ENCODE measurements at regions of chr10 and their contacts with region 1.

Region 1: GRCh38 chr10:114550756-114551635 is 107.1 kb downstream of the ABLIM1 start:
- DNase-seq: peak in 3 of 5 donors; percentile 33 to 39 (median 37)
- H3K4me3 ChIP-seq: no peak overlapping the region
- H3K4me3 Mint-ChIP-seq: no peak overlapping the region
- H3K27ac ChIP-seq: no peak overlapping the region
- H3K27ac Mint-ChIP-seq: peak overlapping the region in 4 of 7 donors; percentile 4 to 83 (median 40)
- H3K4me1 ChIP-seq: peaks cover 33% of the 10 kb centered on the region
- H3K4me1 Mint-ChIP-seq: peaks cover 13 to 28% (median 20%) of the 10 kb centered on the region in 4 donors
- H3K27me3 ChIP-seq: no peaks in the 10 kb centered on the region
- H3K27me3 Mint-ChIP-seq: no peaks in the 10 kb centered on the region

Region 2: DNA sequence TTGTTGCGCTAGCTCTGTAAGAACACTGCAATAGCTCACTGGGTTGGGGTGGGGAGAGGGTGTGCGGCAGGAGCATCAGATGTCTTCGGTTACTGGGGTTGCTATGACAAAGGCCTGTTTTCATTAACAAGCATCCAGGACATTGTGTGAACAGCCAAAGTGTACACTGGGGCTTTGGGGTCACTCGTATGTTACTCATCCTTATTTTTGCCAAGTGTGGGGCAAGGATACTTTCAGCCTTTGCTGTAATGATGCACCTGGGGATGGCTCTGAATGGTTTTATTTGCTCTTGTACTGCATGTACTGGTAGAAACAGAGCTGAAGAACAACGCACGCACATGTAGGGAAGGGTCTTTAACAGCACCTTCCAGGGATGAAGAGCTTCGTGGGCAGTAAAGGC is 73.7 kb before region 1 on chr10:
- CTCF ChIA-PET with region 1: interaction called, 241 read pairs
- POLR2A ChIA-PET with region 1: no interaction called
- intact Hi-C with region 1: no loop called
- DNase-seq: no peak
- H3K4me3 ChIP-seq: no peak overlapping the region
- H3K4me3 Mint-ChIP-seq: no peak overlapping the region
- H3K27ac ChIP-seq: no peak overlapping the region
- H3K27ac Mint-ChIP-seq: peak overlapping the region in 6 of 7 donors; percentile 16 to 83 (median 74)
- H3K4me1 ChIP-seq: no peaks in the 10 kb centered on the region
- H3K4me1 Mint-ChIP-seq: peaks cover 35 to 68% (median 44%) of the 10 kb centered on the region in 4 donors
- H3K27me3 ChIP-seq: no peaks in the 10 kb centered on the region
- H3K27me3 Mint-ChIP-seq: no peaks in the 10 kb centered on the region

Region 3: DNA sequence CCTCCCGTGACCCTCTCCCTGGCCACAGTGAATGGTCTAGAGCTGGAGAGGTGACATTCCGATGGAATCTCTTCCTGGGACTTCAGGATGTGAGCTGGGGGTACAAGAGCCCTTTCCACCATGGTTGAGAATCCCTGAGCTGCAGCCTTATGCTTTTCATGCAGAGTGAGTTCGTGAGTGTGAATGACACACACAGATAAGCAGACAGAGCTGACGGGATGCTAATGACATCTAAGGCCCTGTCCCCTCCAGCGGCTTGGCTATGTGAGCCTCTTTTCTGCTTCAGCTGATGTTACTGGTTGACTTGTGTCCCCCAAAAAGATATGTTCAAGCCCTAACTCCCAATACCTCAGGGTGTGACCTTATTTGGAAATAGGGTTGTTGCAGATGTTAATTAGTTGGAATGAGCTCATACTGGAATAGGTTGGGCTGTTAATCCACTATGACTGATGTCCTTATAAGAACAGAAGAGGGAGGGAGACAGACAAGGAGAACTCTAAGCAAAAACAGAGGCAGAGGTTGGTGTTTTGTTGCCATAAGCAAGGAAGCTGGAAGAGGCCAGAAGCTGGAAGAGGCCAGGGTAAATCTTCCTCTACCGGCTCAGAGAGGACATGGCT is 35.6 kb before region 1 on chr10:
- CTCF ChIA-PET with region 1: interaction called, 12 read pairs
- POLR2A ChIA-PET with region 1: interaction called, 459 read pairs
- intact Hi-C with region 1: no loop called
- DNase-seq: no peak
- H3K4me3 ChIP-seq: no peak overlapping the region
- H3K4me3 Mint-ChIP-seq: peak overlapping the region in 4 of 8 donors; percentile 4 to 35 (median 15)
- H3K27ac ChIP-seq: no peak overlapping the region
- H3K27ac Mint-ChIP-seq: peak overlapping the region in 5 of 7 donors; percentile 20 to 77 (median 52)
- H3K4me1 ChIP-seq: peaks cover 93% of the 10 kb centered on the region
- H3K4me1 Mint-ChIP-seq: peaks cover 71 to 95% (median 83%) of the 10 kb centered on the region in 4 donors
- H3K27me3 ChIP-seq: no peaks in the 10 kb centered on the region
- H3K27me3 Mint-ChIP-seq: no peaks in the 10 kb centered on the region

Region 4: GRCh38 chr10:114631666-114632417 is 80.8 kb after region 1 on chr10:
- CTCF ChIA-PET with region 1: no interaction called
- POLR2A ChIA-PET with region 1: no interaction called
- intact Hi-C with region 1: no loop called
- DNase-seq: peak in 4 of 5 donors; percentile 4 to 26 (median 14)
- H3K4me3 ChIP-seq: peak overlapping the region in 1 of 2 donors; percentile 11
- H3K4me3 Mint-ChIP-seq: peak overlapping the region; percentile 80 to 90 (median 89)
- H3K27ac ChIP-seq: no peak overlapping the region
- H3K27ac Mint-ChIP-seq: peak overlapping the region in 3 of 7 donors; percentile 19 to 83 (median 83)
- H3K4me1 ChIP-seq: peaks cover 18% of the 10 kb centered on the region
- H3K4me1 Mint-ChIP-seq: peaks cover 10 to 24% (median 11%) of the 10 kb centered on the region in 4 donors
- H3K27me3 ChIP-seq: peaks cover 10% of the 10 kb centered on the region
- H3K27me3 Mint-ChIP-seq: peaks cover 23 to 44% of the 10 kb centered on the region in 2 donors

Region 5: GRCh38 chr10:114648368-114648767 is 97.4 kb after region 1 on chr10:
- CTCF ChIA-PET with region 1: no interaction called
- POLR2A ChIA-PET with region 1: no interaction called
- intact Hi-C with region 1: no loop called
- DNase-seq: no peak
- H3K4me3 ChIP-seq: no peak overlapping the region
- H3K4me3 Mint-ChIP-seq: no peak overlapping the region
- H3K27ac ChIP-seq: no peak overlapping the region
- H3K27ac Mint-ChIP-seq: no peak overlapping the region
- H3K4me1 ChIP-seq: no peaks in the 10 kb centered on the region
- H3K4me1 Mint-ChIP-seq: no peaks in the 10 kb centered on the region
- H3K27me3 ChIP-seq: no peaks in the 10 kb centered on the region
- H3K27me3 Mint-ChIP-seq: no peaks in the 10 kb centered on the region

Region 6: GRCh38 chr10:114703377-114704107 is 152.5 kb after region 1 on chr10:
- CTCF ChIA-PET with region 1: interaction called, 4 read pairs
- POLR2A ChIA-PET with region 1: no interaction called
- intact Hi-C with region 1: loop called (anchors 1 kb)
- DNase-seq: peak in 4 of 5 donors; percentile 13 to 25 (median 16)
- H3K4me3 ChIP-seq: no peak overlapping the region
- H3K4me3 Mint-ChIP-seq: no peak overlapping the region
- H3K27ac ChIP-seq: no peak overlapping the region
- H3K27ac Mint-ChIP-seq: no peak overlapping the region
- H3K4me1 ChIP-seq: no peaks in the 10 kb centered on the region
- H3K4me1 Mint-ChIP-seq: no peaks in the 10 kb centered on the region
- H3K27me3 ChIP-seq: no peaks in the 10 kb centered on the region
- H3K27me3 Mint-ChIP-seq: peaks cover 1 to 5% of the 10 kb centered on the region in 2 donors

Region 7: GRCh38 chr10:114876602-114877300 is 325.8 kb after region 1 on chr10:
- CTCF ChIA-PET with region 1: interaction called, 17 read pairs
- POLR2A ChIA-PET with region 1: no interaction called
- intact Hi-C with region 1: loop called (anchors 1 kb)
- DNase-seq: peak in 1 of 5 donors; percentile 13
- H3K4me3 ChIP-seq: no peak overlapping the region
- H3K4me3 Mint-ChIP-seq: peak overlapping the region in 1 of 8 donors; percentile 36
- H3K27ac ChIP-seq: no peak overlapping the region
- H3K27ac Mint-ChIP-seq: no peak overlapping the region
- H3K4me1 ChIP-seq: no peaks in the 10 kb centered on the region
- H3K4me1 Mint-ChIP-seq: peaks cover 4 to 14% (median 8%) of the 10 kb centered on the region in 4 donors
- H3K27me3 ChIP-seq: no peaks in the 10 kb centered on the region
- H3K27me3 Mint-ChIP-seq: peaks cover 23 to 35% of the 10 kb centered on the region in 2 donors